Psoas muscle (tissue), 8 donors: ENCODE measurements at regions of chr5 and their contacts with region 1.

Region 1: GRCh38 chr5:67003935-67004729 is 192.5 kb downstream of the CD180 start:
- DNase-seq: peak; percentile 81 to 86
- ATAC-seq: peak; percentile 88 to 92 (median 90)
- H3K4me3 ChIP-seq: peak overlapping the region; percentile 81
- H3K27ac ChIP-seq: peak overlapping the region; percentile 88
- H3K4me1 ChIP-seq: peaks cover 19% of the 10 kb centered on the region
- H3K27me3 ChIP-seq: no peaks in the 10 kb centered on the region
- CTCF ChIP-seq: no peak

Region 2: DNA sequence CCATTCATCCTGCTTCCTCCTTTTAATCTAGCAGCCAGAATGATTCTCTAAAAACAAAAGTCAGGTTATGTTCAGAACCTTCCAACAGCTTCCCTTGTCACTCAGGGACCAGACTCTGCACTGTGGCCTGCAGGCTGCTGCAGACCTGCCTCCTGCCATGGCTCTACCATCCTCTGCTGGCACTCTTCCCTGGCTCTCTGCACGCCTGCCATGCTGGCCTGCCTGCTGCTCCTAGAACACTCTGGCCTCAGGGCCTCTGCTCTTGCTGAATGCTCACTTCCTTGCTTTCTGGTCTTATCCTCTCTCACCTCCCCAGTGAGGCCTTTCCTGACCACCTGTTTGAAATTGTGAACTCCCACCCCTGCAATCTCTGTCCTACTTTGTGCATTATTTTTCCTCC is 43.0 kb after region 1 on chr5:
- intact Hi-C with region 1: loop called in 1 of 2 experiments (anchors 5 kb)
- DNase-seq: peak; percentile 39 to 63
- ATAC-seq: peak; percentile 71 to 90 (median 76)
- H3K4me3 ChIP-seq: no peak overlapping the region
- H3K27ac ChIP-seq: peak overlapping the region; percentile 48
- H3K4me1 ChIP-seq: peaks cover 64% of the 10 kb centered on the region
- H3K27me3 ChIP-seq: no peaks in the 10 kb centered on the region
- CTCF ChIP-seq: no peak

Region 3: GRCh38 chr5:67095346-67096171 is 91.4 kb after region 1 on chr5:
- intact Hi-C with region 1: loop called in 1 of 2 experiments (anchors 5 kb)
- DNase-seq: peak; percentile 67 to 82
- ATAC-seq: peak; percentile 75 to 91 (median 86)
- H3K4me3 ChIP-seq: peak overlapping the region; percentile 21
- H3K27ac ChIP-seq: peak overlapping the region; percentile 67
- H3K4me1 ChIP-seq: peaks cover 35% of the 10 kb centered on the region
- H3K27me3 ChIP-seq: no peaks in the 10 kb centered on the region
- CTCF ChIP-seq: no peak

Region 4: DNA sequence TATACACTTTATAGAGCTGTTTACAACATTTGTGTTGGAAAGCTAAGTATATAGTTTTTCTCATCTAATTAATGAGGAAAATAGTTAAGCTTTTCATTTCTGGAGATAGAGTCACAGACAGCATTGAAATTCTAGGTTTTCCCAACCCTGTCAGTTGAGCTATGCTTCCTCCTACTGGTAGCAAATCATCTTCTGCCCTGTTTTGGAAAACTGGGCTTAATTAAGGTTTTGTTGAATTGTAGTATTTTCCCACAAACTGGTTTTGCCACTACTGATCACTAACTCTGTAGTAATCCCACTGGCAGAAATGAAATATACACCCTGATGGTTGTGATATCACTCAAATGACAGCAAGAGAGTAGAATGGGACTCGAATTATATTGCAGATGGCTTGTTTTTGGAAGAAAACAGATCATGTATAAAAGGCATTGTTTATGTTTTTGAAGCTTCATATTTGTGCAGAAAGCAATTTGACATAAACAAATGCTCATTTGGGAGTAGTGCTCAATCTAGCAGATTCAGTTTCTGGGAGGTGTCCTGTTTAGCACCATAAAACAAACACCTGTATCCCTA is 145.9 kb after region 1 on chr5:
- intact Hi-C with region 1: loop called in 1 of 2 experiments (anchors 5 kb)
- DNase-seq: no peak
- ATAC-seq: no peak
- H3K4me3 ChIP-seq: peak overlapping the region; percentile 15
- H3K27ac ChIP-seq: no peak overlapping the region
- H3K4me1 ChIP-seq: peaks cover 2% of the 10 kb centered on the region
- H3K27me3 ChIP-seq: no peaks in the 10 kb centered on the region
- CTCF ChIP-seq: no peak

Region 5: GRCh38 chr5:67165526-67166459 is 161.7 kb after region 1 on chr5:
- intact Hi-C with region 1: no loop called
- DNase-seq: peak; percentile 86 to 90
- ATAC-seq: peak; percentile 56 to 93 (median 82)
- H3K4me3 ChIP-seq: peak overlapping the region; percentile 46
- H3K27ac ChIP-seq: peak overlapping the region; percentile 61
- H3K4me1 ChIP-seq: no peaks in the 10 kb centered on the region
- H3K27me3 ChIP-seq: no peaks in the 10 kb centered on the region
- CTCF ChIP-seq: peak; percentile 52